Activated B cell treated with CpG ODN at 0.5 μM for 24 hours (primary cell): ENCODE measurements at regions of chr21 and their contacts with region 1.

Region 1: DNA sequence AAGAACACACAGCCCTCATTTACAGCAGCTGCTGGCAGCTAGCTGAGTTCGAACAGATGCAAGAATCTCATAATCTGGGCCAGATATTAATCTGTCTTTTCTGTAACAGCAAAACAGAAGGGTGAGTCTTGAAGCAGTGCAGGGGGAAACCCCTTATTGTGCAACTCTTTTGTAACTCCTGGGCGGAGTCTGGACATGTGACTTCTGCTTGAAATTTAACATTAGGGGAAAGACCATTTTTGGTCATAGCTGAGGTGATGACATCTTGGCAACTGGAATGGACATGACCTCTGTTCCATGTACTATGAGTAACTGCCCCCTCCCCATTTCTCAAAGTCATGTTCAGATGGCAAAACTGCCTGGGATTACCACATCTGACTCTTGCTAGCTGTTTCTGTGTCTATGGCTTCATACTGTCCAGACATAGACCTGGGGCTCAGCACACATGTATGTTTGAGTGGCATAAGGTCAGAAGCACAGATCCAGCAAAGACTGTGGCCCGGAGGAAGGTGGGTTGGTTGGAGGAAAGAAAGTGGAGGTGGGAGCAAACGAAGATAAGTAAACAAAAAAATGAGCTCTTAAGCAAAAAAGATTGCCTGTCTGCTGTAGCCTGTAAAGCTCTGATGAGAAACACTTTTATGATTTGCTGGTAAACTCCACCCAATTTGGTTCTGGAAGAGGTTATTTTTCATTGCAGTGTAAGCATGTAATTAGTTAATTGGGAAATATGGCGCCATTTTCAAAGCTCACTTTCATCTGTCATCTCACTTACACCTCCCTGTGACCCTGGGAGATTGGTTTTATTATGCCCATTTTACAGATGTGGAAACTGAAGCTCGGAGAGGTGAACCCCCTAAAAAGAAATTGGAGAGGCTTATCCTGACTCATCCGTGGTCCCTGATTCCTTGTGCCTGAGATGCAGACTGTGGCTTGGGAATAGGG is 26.1 kb downstream of the ETS2 start:
- DNase-seq: no peak
- ATAC-seq: peak; percentile 88
- H3K4me3 Mint-ChIP-seq: peak overlapping the region; percentile 29
- H3K27ac Mint-ChIP-seq: peak overlapping the region; percentile 65
- H3K4me1 Mint-ChIP-seq: peaks cover 17% of the 10 kb centered on the region
- H3K27me3 Mint-ChIP-seq: peaks cover 18% of the 10 kb centered on the region
- CTCF ChIP-seq: no peak

Region 2: DNA sequence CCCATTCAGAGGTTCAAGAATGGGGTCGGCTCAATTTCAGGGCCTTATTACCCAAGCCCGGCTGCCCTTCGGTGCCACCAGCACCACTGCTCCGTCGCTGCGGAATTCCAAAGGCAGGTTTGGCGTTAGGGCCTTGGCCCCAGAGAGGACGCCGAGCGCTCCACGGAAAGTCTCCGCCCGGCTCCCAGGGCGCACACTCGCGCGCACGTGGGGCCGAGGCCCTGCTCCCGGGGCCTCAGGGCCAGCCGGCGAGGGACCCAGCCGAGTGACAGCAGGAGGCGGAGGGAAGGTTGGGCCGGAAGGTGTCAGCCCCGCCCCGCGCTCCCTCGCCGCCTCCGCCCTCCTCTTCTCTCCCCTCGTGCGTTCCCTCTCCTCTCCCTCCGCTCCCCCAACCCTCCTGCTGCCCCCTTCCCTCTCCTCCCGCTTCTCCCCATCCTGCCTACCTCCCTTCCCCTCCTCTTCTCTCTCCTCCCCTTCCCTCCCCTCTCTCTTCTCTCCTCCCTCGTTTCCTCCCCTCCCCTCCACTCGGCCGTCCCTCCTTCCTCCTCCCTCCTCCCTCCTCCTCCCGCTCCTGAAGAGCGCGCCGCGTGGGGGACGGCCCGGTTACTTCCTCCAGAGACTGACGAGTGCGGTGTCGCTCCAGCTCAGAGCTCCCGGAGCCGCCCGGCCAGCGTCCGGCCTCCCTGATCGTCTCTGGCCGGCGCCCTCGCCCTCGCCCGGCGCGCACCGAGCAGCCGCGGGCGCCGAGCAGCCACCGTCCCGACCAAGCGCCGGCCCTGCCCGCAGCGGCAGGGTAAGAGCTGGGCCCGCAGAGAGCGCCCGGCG is 26.3 kb before region 1 on chr21 and contains the start of gene ETS2:
- CTCF ChIA-PET with region 1: no interaction called
- POLR2A ChIA-PET with region 1: no interaction called
- intact Hi-C with region 1: loop called (anchors 1 kb)
- DNase-seq: peak; percentile 55
- ATAC-seq: peak; percentile 83
- H3K4me3 Mint-ChIP-seq: peak within 1 kb of the TSS; percentile 83
- H3K27ac Mint-ChIP-seq: peak within 1 kb of the TSS; percentile 30
- H3K4me1 Mint-ChIP-seq: peaks cover 16% of the 10 kb centered on the region
- H3K27me3 Mint-ChIP-seq: peaks cover 9% of the 10 kb centered on the region
- CTCF ChIP-seq: no peak
- total RNA-seq, gene ETS2: 4.4 and 4.5 TPM in 2 replicates